Activated CD8-positive, alpha-beta T cell treated with anti-CD3 and anti-CD28 coated beads, Interleukin-2, amount 10 ng/mL, durations not matched to agents 7 days and 5 days (primary cell): ENCODE measurements at regions of chr13 and their contacts with region 1.

Region 1: GRCh38 chr13:94660695-94661326 is 51.5 kb downstream of the SOX21 start:
- DNase-seq: no peak
- ATAC-seq: no peak
- H3K4me3 Mint-ChIP-seq: no peak overlapping the region
- H3K27ac Mint-ChIP-seq: no peak overlapping the region
- H3K4me1 Mint-ChIP-seq: no peaks in the 10 kb centered on the region
- H3K27me3 Mint-ChIP-seq: peaks cover 24% of the 10 kb centered on the region

Region 2: DNA sequence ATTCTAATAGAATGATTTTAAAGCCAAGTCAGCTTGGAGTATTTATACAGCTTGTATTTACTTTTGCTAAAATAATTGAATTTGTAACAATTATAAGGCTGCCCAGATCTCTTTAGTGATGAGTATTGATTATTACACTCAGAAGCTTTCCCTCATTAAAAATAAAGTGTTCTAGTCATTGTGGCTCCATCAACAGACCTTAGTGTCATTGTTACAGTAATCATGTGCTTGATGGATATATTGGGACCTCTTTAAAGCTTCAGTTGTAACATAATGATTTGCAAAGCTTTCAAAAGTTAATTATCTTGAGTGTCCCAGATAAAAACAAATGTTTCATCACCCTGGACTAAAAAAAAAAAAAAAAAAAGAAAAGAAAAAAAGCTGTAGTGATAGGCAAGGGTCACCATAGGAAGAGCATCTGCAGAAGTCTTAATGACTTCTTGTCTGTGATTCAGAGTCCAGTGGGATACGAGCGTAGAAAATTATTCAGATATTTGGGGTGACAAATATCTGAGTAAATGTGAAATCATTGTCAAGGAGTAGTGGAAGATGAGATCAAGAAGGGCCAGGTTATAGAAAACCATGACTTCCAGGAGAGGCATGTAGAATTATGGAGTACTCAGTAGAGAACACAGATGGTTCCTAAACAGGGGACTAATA is 551.0 kb before region 1 on chr13:
- CTCF ChIA-PET with region 1: no interaction called
- POLR2A ChIA-PET with region 1: no interaction called
- DNase-seq: no peak
- ATAC-seq: no peak
- H3K4me3 Mint-ChIP-seq: no peak overlapping the region
- H3K27ac Mint-ChIP-seq: no peak overlapping the region
- H3K4me1 Mint-ChIP-seq: no peaks in the 10 kb centered on the region
- H3K27me3 Mint-ChIP-seq: no peaks in the 10 kb centered on the region

Region 3: GRCh38 chr13:94674609-94675348 is 14.0 kb after region 1 on chr13:
- CTCF ChIA-PET with region 1: interaction called, 15 read pairs
- POLR2A ChIA-PET with region 1: no interaction called
- DNase-seq: peak; percentile 67
- ATAC-seq: peak; percentile 58
- H3K4me3 Mint-ChIP-seq: no peak overlapping the region
- H3K27ac Mint-ChIP-seq: no peak overlapping the region
- H3K4me1 Mint-ChIP-seq: no peaks in the 10 kb centered on the region
- H3K27me3 Mint-ChIP-seq: peaks cover 23% of the 10 kb centered on the region